ENCODE measurements at regions of chr9 and their contacts with region 1.

Region 1: DNA sequence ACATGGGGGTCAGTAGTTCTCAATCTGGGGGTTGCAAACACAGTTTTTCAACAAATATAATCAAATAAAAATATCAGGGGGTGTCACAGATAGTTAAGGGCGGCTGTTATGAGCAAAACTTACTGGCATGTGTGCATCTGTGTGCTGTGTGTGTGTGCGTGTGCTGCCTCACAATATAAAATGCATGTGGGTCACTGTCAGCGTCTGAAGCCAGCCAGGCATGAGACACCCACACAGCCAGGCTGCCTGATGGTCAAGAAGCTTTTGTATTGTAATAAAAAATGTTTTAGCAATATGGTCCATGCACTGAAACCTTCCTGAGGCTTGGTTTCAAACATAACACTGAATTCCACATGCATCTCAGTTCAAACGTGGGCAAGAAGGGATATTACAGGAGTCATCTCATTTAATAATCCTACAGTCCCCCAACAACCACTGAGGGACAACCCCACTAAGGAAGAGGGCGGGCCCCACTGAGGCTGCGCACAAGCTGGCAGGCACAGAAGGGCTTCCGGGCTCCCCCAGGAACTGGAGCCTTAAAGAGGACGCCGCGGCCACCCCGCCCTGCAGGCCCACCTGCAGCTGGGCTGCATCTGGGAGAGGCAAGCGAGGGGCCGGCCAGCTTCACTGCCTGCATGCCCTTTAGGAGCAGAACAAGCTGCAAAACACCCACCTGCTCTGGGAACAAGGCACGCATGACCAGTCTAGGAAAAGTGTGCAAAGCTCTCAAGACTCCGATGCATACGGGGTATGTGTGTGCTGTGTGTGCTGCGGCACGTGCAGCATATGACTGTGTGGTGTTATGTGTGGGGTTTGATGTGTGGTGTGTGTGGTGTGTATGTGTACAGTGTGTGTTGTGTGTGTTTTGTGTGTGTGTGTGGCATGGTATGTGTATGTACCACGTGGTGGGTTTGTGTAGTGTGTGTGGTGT is 14.1 kb downstream of the SEMA4D start:
- DNase-seq: peak; percentile 72
- H3K4me3 ChIP-seq: peak overlapping the region; percentile 64
- H3K27ac ChIP-seq: no peak overlapping the region
- H3K4me1 ChIP-seq: peaks cover 60% of the 10 kb centered on the region
- CTCF ChIP-seq: no peak

Region 2: DNA sequence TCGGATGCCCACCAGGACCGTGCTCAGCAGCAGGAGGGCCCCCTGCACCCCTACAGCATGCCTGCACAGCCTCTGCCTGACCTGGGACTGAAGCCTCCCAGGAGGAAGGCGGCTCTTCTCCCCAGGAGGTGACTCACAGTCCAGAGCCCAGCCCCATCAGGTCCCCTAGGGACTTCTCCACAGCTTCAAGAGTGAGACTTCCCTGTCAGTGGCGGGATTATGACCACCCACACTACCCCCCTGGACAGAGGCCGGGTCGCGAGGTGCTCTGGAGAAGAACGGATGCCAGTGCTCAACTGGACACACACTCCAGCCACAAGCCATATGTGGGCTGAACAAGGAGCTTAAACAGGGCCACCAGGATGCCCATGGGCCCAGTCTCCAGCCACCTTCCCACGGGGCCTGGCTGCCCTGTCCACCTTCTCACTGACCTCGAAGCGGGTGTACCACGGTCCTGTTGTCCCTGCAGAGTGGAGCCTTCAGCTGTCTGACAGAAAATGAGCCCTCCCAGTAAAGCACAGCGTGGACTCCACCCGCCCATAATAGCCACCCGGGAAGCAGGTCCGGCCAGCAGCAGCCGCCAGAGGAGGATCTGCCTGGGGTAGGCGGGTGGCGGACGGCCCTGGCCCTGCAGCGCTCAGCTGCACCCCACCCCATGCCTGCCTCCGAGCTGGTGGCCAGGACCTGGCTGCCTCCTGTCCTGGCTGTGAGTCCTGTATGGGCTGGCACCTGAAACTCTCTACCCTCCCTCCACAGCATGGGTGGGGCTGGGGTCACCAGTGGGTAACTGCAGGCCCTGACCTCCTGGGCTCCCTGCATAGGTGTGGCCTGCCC is 40.7 kb before region 1 on chr9:
- CTCF ChIA-PET with region 1: no interaction called
- POLR2A ChIA-PET with region 1: no interaction called
- intact Hi-C with region 1: loop called (anchors 1 kb)
- DNase-seq: no peak
- H3K4me3 ChIP-seq: peak overlapping the region; percentile 45
- H3K27ac ChIP-seq: peak overlapping the region; percentile 49
- H3K4me1 ChIP-seq: peaks cover 71% of the 10 kb centered on the region
- CTCF ChIP-seq: no peak

Region 3: DNA sequence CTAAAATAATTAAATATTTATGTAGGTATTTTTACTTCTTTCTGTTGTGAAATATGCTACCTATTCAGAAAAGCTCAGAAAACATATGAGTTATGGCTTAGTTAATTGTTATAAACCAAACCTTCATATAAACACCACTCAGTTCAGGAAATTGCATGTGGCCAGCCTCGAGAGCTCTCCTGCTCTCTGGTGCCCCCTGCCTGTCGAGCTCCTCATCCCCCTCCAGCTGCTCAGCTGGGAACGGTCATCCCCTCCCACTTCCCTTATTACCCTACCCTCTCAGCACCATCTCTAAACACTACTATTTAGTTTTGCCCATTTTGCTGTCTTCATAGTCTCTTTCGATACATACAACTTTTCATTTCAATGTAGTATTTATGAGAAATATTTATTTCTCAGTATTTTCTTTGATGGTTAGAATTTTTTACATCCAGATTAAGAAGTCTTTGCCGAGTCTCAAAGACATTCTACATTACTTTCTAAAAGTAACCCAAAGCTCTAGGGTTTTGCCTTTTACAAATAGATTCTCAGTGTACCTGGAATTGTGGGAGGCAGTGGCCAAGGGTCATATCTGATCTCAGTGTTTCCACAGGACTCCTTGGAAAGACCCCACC is 65.3 kb after region 1 on chr9:
- CTCF ChIA-PET with region 1: interaction called, 3 read pairs
- POLR2A ChIA-PET with region 1: interaction called, 3 read pairs
- intact Hi-C with region 1: loop called (anchors 2 kb)
- DNase-seq: peak; percentile 85
- H3K4me3 ChIP-seq: no peak overlapping the region
- H3K27ac ChIP-seq: no peak overlapping the region
- H3K4me1 ChIP-seq: peaks cover 32% of the 10 kb centered on the region
- CTCF ChIP-seq: peak; percentile 99

Measured in OCI-LY7 (cell line).